Adrenal gland (tissue), 19 donors: ENCODE measurements at regions of chr11 and their contacts with region 1.

Region 1: DNA sequence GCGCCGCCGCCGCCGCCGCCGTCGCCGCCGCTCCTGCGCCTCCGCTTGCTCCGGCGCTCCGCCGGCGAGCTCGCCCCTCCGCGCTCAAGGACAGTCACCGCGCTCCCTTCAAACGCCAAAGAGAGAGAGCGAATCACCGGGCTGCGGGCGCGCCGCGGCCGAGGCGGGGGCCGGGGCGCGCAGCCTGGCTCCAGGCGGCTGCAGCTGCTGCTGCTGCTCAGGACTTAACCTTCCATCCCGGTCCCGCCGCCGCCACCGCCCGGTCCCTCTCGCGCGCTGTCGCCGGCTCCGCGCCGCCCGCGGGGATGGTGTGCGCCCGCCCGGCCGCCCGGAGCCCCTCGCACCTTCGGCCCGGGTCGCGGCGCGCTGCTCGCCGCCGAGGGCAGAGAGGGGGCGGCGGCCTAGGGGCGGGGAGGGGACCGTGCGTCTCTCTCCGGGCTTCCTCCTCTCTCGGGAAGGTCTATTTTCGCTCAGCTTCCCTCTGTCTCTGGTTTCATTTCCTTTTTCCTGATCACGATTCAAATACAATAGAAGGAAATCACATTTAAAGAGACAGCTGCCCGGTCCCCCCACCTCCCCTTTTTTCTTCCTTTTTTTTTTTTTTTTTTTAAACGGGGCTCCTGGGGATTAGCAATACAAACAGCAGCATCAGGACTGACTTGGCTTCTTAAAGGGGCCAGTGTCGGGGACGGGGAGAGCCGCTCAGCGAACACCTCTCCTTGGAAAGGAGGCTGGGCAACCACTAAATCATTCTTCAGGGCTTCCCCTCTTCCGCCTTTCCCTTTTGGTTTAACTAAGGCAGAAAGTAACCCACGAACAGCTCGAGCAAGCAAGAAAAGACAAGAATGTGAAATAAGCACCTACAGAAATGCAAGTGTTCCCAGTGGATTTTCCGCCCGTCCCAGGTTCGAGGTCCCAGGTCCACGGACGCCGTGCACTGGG is 22.1 kb downstream of the LMO2 start:
- DNase-seq: peak in 6 of 7 donors; percentile 39 to 48 (median 44)
- H3K4me3 ChIP-seq: peak overlapping the region in 2 of 4 donors; percentile 47 to 76
- H3K27ac ChIP-seq: peak overlapping the region in 3 of 5 donors; percentile 69 to 82 (median 72)
- H3K4me1 ChIP-seq: peaks cover 9 to 16% of the 10 kb centered on the region in 2 donors
- H3K27me3 ChIP-seq: peaks cover 7% of the 10 kb centered on the region
- CTCF ChIP-seq: no peak
- POLR2A ChIP-seq: peak in 1 of 2 donors; percentile 34

Region 2: DNA sequence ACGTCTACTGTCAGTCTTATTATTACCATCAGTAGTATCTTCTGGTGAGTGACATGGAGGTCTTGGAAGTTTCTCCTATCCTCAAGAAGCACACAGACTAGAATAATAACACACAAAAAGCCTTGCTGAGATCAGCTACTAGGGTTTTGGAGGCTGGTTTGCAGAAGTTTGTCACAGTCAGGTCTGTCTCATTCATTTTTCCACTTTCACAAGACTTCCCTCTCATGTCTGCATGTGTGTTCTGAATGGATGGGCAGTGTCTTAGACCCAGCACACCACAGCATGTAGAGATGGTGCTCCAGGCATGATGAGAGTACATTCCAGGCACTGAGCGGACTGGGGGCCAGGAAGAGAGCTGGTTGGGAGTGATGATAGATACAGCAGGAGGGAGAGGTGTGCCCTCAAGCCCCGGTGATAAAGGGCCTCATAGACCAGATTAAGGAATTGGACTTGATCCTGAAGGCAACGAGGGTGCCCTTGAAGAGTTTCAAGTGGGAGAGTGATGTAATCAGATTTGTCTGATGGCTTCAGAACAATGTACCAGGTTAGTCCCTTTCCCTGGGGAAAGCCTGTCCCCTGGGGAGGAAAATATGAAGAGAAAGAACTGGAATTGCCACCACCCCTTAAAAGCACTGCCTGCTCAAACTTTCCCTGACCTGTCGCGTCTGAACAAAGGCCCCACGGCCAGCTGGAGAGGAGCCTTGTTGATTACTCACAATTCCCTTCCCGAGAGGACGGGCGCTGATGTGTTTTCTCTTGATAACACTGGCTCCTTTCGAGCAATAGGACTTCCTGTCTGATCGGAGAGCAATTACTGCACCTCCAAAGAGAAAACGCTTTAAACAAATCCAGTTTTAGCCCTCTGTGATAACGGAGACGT is 67.2 kb after region 1 on chr11:
- intact Hi-C with region 1: loop called in 1 of 2 experiments (anchors 10 kb)
- DNase-seq: peak; percentile 68 to 92 (median 83)
- H3K4me3 ChIP-seq: no peak overlapping the region
- H3K27ac ChIP-seq: peak overlapping the region in 2 of 5 donors; percentile 65 to 70
- H3K4me1 ChIP-seq: peaks cover 0 to 16% of the 10 kb centered on the region in 2 donors
- H3K27me3 ChIP-seq: no peaks in the 10 kb centered on the region
- CTCF ChIP-seq: no peak
- POLR2A ChIP-seq: no peak

Region 3: GRCh38 chr11:34380696-34381095 is 510.9 kb after region 1 on chr11:
- intact Hi-C with region 1: no loop called
- DNase-seq: no peak
- H3K4me3 ChIP-seq: no peak overlapping the region
- H3K27ac ChIP-seq: no peak overlapping the region
- H3K4me1 ChIP-seq: no peaks in the 10 kb centered on the region
- H3K27me3 ChIP-seq: no peaks in the 10 kb centered on the region
- CTCF ChIP-seq: no peak
- POLR2A ChIP-seq: no peak